Activated CD4-positive, alpha-beta memory T cell treated with anti-CD3 and anti-CD28 coated beads, Interleukin-2, amount 10 ng/mL, durations not matched to agents 7 days and 5 days (primary cell): ENCODE measurements at regions of chr2 and their contacts with region 1.

Region 1: GRCh38 chr2:227890495-227891079 is 19.2 kb downstream of the DAW1 start:
- DNase-seq: no peak
- H3K4me3 Mint-ChIP-seq: no peak overlapping the region
- H3K27ac Mint-ChIP-seq: no peak overlapping the region
- H3K4me1 Mint-ChIP-seq: no peaks in the 10 kb centered on the region
- H3K27me3 Mint-ChIP-seq: peaks cover 5% of the 10 kb centered on the region

Region 2: DNA sequence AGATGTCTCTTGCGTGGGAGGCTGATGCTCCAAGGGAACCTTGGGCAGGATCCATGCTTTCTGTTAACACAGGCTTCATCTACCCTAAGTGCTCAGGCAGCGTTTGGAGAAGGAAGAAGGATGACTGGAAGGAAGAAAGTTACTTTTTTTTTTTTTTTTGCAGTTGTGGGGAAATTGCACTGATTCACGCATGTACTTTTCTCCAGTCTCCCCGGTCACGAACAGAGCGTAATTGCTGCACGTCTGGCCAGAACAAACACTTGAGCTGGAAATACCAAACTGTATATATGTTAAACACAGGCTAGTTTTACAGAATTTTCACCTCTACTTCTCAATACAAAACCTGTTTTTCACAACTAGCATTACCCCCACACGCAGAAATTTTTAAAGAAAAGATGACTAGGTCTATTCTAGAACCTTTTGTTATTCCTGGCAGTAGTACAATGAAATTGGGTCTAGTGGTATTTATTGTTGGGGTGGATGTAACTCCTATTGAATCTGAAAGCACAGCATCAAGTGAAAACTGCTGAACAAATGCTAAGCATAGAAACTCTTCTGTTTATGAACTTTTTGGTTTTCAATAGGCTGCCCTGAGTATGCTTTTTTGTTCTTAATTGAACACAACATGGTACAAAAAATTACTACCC is 233.3 kb before region 1 on chr2:
- CTCF ChIA-PET with region 1: interaction called, 14 read pairs
- POLR2A ChIA-PET with region 1: no interaction called
- DNase-seq: no peak
- H3K4me3 Mint-ChIP-seq: no peak overlapping the region
- H3K27ac Mint-ChIP-seq: no peak overlapping the region
- H3K4me1 Mint-ChIP-seq: no peaks in the 10 kb centered on the region
- H3K27me3 Mint-ChIP-seq: peaks cover 6% of the 10 kb centered on the region

Region 3: DNA sequence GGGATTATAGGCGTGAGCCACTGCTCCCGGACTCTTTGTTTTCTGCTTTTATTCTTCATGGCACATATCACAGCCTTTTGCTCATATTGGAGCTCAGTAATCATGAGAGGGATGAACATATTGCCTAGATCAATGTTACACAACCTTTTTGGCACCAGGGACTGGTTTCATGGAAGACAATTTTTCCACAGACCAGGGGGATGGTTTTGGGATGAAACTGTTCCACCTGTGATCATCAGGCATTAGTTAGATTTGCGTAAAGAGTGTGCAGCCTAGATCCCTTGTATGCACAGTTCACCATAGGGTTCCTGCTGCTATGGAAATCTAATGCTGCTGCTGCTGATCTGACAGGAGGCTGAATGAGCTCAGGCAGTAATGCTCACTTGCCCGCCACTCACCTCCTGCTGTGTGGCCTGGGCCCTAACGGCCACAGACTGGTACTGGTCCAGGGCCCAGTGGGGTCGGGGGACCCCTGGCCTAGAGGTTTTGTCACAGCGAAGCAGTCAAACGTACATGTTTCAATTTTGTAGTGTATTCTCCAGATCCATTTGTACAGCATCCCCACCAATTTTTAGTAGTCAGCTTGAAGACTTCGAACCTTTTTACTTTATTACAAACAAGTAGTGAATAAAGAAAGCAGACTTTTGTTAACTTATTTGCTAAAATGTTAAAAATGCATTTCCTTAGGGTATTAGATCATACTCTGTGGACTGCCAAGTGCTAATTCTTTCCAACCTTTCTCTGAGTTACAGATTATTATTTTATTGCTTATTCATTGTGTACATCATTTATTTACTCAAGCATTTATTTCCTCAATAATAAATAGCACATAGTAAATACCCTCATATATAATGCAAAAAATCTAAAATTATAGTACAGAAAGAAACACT is 12.9 kb before region 1 on chr2:
- CTCF ChIA-PET with region 1: interaction called, 21 read pairs
- POLR2A ChIA-PET with region 1: no interaction called
- DNase-seq: no peak
- H3K4me3 Mint-ChIP-seq: no peak overlapping the region
- H3K27ac Mint-ChIP-seq: no peak overlapping the region
- H3K4me1 Mint-ChIP-seq: peaks cover 5% of the 10 kb centered on the region
- H3K27me3 Mint-ChIP-seq: peaks cover 9% of the 10 kb centered on the region

Region 4: DNA sequence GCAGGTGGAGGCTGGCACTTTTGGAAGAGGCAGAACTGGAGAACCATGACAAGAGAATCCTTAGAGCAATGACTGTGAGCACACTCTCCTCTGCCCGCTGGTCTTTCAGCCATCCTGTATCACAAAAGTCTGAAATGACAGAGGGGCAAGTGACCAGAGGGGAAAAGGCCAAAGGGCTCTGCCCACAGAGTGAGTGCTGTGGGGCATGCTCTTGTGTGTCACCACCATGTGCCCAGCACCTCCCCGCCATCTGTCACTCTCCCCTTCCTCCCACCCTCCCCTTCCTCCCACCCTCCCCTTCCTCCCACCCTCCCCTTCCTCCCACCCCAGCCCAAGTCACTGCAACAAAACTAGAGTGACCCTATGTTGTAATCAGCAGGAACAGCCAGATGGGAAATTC is 12.8 kb after region 1 on chr2:
- CTCF ChIA-PET with region 1: interaction called, 16 read pairs
- POLR2A ChIA-PET with region 1: no interaction called
- DNase-seq: no peak
- H3K4me3 Mint-ChIP-seq: no peak overlapping the region
- H3K27ac Mint-ChIP-seq: no peak overlapping the region
- H3K4me1 Mint-ChIP-seq: no peaks in the 10 kb centered on the region
- H3K27me3 Mint-ChIP-seq: no peaks in the 10 kb centered on the region

Region 5: GRCh38 chr2:229273723-229274338 is 1383.2 kb after region 1 on chr2:
- CTCF ChIA-PET with region 1: interaction called, 11 read pairs
- POLR2A ChIA-PET with region 1: no interaction called
- DNase-seq: no peak
- H3K4me3 Mint-ChIP-seq: no peak overlapping the region
- H3K27ac Mint-ChIP-seq: no peak overlapping the region
- H3K4me1 Mint-ChIP-seq: no peaks in the 10 kb centered on the region
- H3K27me3 Mint-ChIP-seq: peaks cover 15% of the 10 kb centered on the region